GM13976 (cell line): ENCODE measurements at regions of chr12 and their contacts with region 1.

Region 1: DNA sequence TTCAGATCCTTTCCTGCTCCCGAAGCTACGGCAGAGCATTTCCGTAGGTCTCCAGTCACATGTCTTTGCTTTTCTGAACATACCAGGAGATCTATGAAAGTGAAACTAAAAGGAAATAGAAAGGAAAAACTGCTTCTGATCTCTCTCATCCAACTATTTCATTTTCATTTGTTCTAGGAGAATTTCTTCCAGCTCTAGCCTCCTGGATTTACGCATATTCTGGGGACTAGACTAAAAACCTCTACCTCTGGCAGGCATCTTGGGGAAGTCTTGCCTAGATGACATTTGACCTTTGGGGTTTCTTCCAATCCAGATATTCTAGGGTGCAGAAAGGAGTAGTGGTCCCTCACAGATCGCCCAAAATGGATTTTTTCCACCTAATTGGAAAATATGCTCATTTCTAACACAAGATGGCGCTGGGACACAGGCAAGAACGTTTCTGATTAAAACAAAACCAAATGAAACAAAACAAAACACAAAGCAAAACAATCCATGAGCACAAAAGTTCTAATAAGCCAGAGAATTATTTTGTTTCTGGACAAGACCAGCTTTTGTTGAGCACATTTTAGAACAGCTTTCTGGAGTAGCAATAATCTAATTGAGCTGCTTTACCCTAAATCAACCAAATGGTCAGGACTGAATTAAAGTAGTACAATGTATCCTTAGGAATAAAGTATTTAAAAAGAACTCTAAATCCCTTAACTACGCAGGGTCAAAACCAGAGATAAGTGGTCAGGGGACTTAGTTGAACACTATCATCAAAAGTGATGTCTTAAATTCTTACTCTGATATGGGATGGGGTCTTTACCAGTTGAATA is 12.3 kb upstream of the PARP11 start:
- DNase-seq: peak; percentile 47
- CTCF ChIP-seq: peak; percentile 75

Region 2: DNA sequence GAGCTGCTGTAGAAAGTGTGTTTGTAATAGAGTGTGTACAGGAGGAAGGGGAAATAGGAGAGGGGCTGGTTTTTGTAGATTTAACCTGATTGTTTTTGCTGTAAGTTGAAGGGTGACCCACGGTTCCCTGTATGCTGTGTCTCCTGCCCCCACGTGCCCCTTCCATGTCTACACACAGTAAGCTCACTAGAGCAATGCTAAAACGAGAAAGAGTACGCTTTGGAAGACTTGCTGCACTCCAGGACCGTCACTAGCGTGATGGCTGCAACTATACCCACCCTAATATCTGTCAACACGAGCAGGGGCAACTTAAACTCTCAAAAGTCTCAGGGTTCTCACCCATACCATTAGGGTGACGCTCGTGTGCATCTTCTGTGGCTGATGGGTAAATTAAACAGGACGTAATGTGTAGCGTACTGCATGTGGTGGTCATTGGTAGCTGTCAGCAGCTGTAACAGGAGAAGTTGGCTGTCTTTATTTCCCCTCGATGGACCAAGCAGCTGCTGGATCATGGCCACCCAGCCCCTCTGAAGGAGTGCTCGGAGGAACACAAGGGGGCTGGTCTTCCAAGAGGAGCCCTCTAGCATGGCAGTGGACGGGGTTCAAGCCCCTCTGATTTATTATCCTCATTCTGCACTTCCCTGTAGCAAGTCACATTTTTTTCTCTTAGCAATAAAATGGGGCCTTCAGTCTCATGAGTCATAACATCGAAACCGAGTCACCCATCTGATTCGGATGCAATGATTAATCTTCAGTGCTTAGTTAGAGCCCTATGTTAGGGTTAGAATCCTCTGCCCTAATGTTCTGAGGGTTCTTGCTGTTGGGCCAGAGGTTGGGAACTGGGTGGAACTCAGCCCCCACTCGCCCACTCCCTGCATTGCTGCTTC is 402.1 kb after region 1 on chr12:
- in situ Hi-C with region 1: loop called (anchors 10 kb)
- DNase-seq: no peak
- CTCF ChIP-seq: no peak

Region 3: GRCh38 chr12:4763549-4763948 is 878.1 kb after region 1 on chr12:
- in situ Hi-C with region 1: loop called (anchors 25 kb)
- DNase-seq: no peak
- CTCF ChIP-seq: no peak